Ascending aorta (tissue), 2 donors: ENCODE measurements at regions of chr17 and their contacts with region 1.

Region 1: GRCh38 chr17:7989781-7990655 is 12.4 kb upstream of the GUCY2D start:
- DNase-seq: peak; percentile 41 to 90
- H3K4me3 ChIP-seq: peak overlapping the region; percentile 60 to 79
- H3K27ac ChIP-seq: peak overlapping the region in 1 of 2 donors; percentile 34
- H3K4me1 ChIP-seq: no peaks in the 10 kb centered on the region
- H3K27me3 ChIP-seq: no peaks in the 10 kb centered on the region
- CTCF ChIP-seq: peak; percentile 91 to 98 (median 96)

Region 2: GRCh38 chr17:7740481-7741001 is 249.5 kb before region 1 on chr17:
- intact Hi-C with region 1: loop called (anchors 5 kb)
- DNase-seq: no peak
- H3K4me3 ChIP-seq: no peak overlapping the region
- H3K27ac ChIP-seq: no peak overlapping the region
- H3K4me1 ChIP-seq: no peaks in the 10 kb centered on the region
- H3K27me3 ChIP-seq: no peaks in the 10 kb centered on the region
- CTCF ChIP-seq: no peak

Region 3: DNA sequence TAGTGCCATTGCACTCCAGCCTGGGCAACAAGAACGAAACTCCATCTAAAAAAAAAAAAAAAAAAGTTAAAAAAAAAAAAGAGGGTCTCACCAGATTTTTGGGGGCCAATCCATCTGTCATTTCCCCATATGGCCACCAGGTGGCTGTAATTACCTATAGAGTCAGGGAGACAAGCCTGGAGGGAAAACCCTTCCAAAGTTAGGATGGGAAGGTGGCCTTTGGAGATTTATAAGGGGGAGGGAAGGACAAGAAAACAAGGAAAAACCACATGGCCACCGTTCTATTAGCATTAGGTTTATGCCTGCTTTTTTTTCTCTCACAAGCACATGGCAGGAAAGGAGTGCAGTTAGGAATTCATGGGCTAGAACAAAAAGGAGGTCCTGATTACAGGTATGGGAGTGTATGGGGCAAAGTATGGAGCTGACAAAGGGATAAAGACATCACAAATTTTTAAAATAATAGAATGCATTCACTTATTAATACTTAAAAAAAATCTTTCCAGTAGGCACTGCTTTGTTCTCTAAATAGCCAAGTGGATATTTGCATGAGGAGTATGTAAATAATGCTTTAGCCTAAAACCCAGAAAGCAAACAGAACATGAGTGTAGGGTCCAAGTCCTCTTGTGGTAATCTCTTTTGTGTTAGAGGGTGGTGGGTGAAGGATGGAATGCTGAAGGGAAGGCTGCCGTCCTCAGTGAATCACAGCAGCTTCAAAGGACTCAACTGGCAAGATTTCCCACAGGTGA is 127.2 kb before region 1 on chr17:
- intact Hi-C with region 1: loop called (anchors 1 kb)
- DNase-seq: no peak
- H3K4me3 ChIP-seq: no peak overlapping the region
- H3K27ac ChIP-seq: no peak overlapping the region
- H3K4me1 ChIP-seq: peaks cover 0 to 10% of the 10 kb centered on the region in 2 donors
- H3K27me3 ChIP-seq: no peaks in the 10 kb centered on the region
- CTCF ChIP-seq: peak; percentile 76 to 83 (median 76)

Region 4: GRCh38 chr17:8038954-8039610 is 49.1 kb after region 1 on chr17 and contains the start of gene ALOX15B:
- intact Hi-C with region 1: no loop called
- DNase-seq: peak in 1 of 2 donors; percentile 56
- H3K4me3 ChIP-seq: peak within 1 kb of the TSS; percentile 5 to 48
- H3K27ac ChIP-seq: no peak within 1 kb of the TSS
- H3K4me1 ChIP-seq: no peaks in the 10 kb centered on the region
- H3K27me3 ChIP-seq: peaks cover 10% of the 10 kb centered on the region
- CTCF ChIP-seq: no peak
- total RNA-seq, gene ALOX15B: 2.3 TPM